ENCODE measurements at regions of chr4 and their contacts with region 1.

Region 1: DNA sequence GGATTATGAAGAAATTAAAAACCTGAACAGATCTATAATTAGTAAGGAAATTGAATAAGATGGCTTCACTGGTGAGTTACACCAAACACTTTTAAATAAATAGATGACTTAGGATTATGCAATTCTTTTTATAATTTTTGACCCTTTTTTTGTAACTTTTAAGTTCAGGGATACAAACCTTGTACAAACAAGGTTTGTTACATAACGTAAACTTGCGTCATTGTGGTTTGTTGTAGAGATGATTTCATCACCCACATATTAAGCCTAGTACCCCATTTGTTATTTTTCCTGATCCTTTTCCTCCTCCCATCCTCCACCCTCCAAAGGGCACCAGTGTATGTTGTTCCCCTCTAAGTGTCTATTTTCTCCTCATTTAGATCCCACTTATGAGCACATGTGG is 75.7 kb downstream of the CPEB2 start:
- DNase-seq: no peak
- ATAC-seq: peak; percentile 64

Region 2: GRCh38 chr4:14532436-14532835 is 545.5 kb before region 1 on chr4:
- intact Hi-C with region 1: loop called (anchors 2 kb)
- DNase-seq: no peak
- ATAC-seq: no peak

Region 3: DNA sequence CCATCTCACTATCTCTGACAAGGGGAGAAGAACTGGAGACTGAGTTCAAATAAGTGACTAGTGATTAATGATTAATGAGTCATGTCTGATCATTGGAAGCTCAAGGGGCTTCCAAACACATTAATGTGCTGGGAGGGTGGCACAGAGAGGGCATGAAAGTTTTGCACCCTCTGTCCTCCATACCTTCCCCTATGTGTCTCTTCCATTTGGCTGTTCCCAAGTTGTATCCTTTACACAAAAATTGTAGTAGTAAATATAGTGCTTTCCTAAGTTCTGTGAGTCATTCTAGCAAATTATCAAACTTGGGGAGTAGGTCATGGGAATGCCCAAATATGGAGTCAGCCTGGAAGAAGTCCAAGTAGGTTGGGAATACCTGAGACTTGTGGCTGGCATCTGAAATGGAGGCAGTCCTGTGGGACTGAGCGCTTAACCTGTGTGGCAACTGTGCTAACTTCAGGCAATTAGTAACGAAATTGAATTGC is 599.6 kb after region 1 on chr4:
- intact Hi-C with region 1: no loop called
- DNase-seq: no peak
- ATAC-seq: no peak

Measured in sciatic nerve (tissue), 2 donors.